Calu3 (cell line): ENCODE measurements at regions of chr5 and their contacts with region 1.

Region 1: DNA sequence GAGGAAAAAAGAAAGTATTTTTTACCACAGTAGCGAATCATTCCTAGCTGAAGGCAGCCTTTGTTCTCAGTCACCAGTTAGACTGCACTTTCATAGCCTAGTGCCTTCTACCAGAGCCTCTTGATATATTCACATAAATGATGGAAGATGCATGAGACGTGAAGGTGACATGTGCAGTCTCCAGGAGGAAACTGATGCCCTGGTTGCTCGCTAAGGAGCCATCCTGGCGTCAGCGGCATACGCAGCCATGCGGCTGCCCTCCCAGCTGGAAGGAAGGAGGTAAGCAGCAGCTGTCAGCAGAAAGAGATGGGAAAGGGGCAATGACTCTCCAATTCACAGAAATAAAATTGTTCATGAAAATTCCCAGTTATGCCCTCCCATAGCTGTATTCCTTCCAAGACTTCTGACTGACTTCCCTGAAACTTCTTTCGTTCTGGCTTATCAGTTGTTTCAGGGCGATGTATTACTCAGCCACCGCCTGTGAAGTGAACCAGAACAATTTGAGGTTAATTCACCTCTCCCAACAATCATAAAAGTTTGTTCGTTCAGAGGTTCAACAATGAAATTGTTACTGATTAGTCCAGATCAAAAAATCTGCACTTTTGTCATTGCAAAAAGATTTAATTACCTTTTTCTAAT is 331.2 kb downstream of the NR2F1-AS1 start:
- DNase-seq: peak; percentile 33
- H3K4me3 Mint-ChIP-seq: peak overlapping the region; percentile 65
- H3K27ac Mint-ChIP-seq: peak overlapping the region; percentile 9
- H3K4me1 Mint-ChIP-seq: no peaks in the 10 kb centered on the region
- H3K27me3 Mint-ChIP-seq: no peaks in the 10 kb centered on the region
- CTCF ChIP-seq: no peak

Region 2: DNA sequence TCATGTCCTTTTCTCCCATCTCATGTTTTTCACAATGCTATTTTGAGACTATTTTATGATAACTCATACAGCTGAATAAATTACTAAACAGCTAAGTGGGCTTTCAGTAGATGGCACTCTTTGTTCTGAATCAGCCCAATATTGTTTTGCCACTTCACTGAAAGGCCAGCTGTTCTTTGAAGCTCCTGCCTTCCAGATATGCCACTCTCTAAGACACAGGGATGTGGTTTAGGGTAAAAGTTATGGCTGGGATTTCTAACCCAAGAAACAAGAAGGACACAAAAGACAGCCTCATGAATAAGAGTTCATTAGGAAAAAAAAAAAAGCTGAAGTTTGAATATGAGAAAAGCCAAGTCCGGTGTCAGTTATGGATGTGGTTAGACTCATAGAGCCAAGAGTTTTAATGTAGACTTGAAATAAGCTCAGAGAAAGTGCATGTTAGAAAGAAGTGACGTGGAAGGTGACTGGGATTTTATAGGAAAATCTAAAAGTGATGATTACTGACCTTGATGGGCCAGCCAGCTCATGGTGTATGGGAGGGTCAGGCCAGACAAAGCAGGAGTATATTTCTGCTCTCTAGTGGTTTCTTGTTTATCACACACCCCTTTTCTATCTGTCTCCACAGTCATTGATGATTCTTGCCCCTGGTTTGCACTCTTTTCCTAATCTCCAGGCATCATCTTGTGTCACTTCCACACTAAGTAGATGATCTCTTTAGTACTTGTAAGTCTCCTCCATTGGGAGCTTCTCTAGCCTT is 157.2 kb before region 1 on chr5:
- CTCF ChIA-PET with region 1: no interaction called
- intact Hi-C with region 1: loop called (anchors 2 kb)
- DNase-seq: no peak
- H3K4me3 Mint-ChIP-seq: no peak overlapping the region
- H3K27ac Mint-ChIP-seq: no peak overlapping the region
- H3K4me1 Mint-ChIP-seq: peaks cover 12% of the 10 kb centered on the region
- H3K27me3 Mint-ChIP-seq: no peaks in the 10 kb centered on the region
- CTCF ChIP-seq: no peak

Region 3: GRCh38 chr5:93107805-93108520 is 141.8 kb before region 1 on chr5:
- CTCF ChIA-PET with region 1: no interaction called
- intact Hi-C with region 1: no loop called
- DNase-seq: no peak
- H3K4me3 Mint-ChIP-seq: no peak overlapping the region
- H3K27ac Mint-ChIP-seq: no peak overlapping the region
- H3K4me1 Mint-ChIP-seq: no peaks in the 10 kb centered on the region
- H3K27me3 Mint-ChIP-seq: no peaks in the 10 kb centered on the region
- CTCF ChIP-seq: no peak

Region 4: GRCh38 chr5:93208141-93208751 is 41.5 kb before region 1 on chr5:
- CTCF ChIA-PET with region 1: no interaction called
- intact Hi-C with region 1: no loop called
- DNase-seq: no peak
- H3K4me3 Mint-ChIP-seq: no peak overlapping the region
- H3K27ac Mint-ChIP-seq: no peak overlapping the region
- H3K4me1 Mint-ChIP-seq: no peaks in the 10 kb centered on the region
- H3K27me3 Mint-ChIP-seq: no peaks in the 10 kb centered on the region
- CTCF ChIP-seq: no peak